ENCODE measurements at regions of chr5 and their contacts with region 1.

Region 1: GRCh38 chr5:11182441-11183268 is 421.6 kb upstream of the DAP start:
- DNase-seq: peak in 3 of 7 donors; percentile 24 to 32 (median 29)
- H3K4me3 ChIP-seq: no peak overlapping the region
- H3K27ac ChIP-seq: no peak overlapping the region
- H3K4me1 ChIP-seq: no peaks in the 10 kb centered on the region
- H3K27me3 ChIP-seq: no peaks in the 10 kb centered on the region
- CTCF ChIP-seq: peak; percentile 34 to 56 (median 48)
- POLR2A ChIP-seq: no peak

Region 2: DNA sequence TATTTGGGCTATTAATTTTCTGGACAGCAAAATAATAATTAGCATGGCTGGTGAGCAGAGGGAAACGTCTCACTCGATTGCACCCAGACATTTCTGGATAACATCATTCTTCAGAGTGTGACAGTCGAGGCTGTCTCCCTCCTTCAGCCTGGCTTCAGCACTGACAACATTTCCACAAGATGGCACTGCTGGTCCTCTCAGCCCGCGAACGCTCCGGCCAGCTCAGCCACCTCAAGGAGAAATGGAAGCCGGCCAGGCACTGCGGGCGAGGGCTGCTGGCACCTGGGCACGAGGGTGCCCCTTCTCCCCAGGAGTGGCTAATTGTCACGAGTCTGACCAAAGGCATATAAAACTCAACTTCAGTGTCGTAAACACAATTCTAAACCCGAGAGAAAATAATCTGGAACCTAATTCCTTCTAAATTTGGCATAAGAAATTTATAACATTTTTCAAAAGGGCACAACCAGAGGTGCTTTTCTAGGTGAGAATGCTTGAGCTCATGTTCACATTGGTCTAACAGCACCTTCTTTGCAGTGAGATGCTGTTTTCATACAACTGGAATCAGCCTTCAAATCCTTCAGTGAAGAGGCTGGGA is 487.5 kb before region 1 on chr5:
- intact Hi-C with region 1: loop called in 1 of 2 experiments (anchors 5 kb)
- DNase-seq: peak; percentile 71 to 90 (median 86)
- H3K4me3 ChIP-seq: no peak overlapping the region
- H3K27ac ChIP-seq: no peak overlapping the region
- H3K4me1 ChIP-seq: peaks cover 3 to 5% of the 10 kb centered on the region in 2 donors
- H3K27me3 ChIP-seq: no peaks in the 10 kb centered on the region
- CTCF ChIP-seq: peak; percentile 63 to 83 (median 82)
- POLR2A ChIP-seq: no peak

Region 3: DNA sequence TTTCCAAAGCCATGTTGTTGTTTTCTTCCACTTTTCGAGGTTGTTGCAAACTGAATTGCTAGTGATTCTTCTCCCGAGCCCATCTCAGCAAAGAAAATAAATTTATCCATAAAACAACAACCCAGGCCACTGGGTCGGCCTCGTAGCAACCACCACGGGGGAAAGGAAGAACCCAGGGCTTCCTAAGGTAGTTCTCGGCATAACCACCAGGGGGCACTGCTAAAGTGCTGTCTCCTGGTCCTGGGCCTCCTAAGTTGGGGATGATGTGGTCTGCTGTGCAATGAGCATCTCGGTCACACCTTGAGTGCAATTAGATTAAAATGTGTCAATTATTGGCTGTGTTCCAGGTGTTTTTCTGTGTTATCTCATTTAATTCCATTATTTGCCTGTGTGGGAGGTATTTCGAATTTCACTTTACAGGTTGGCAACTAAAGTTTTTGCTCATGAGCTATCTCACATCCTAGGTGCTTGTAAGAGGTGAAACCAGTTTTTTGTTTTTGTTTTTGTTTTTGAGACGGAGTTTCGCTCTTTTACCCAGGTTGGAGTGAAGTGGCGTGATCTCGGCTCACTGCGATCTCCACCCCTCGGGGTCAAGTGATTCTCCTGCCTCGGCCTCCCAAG is 318.8 kb before region 1 on chr5:
- intact Hi-C with region 1: loop called in 1 of 2 experiments (anchors 5 kb)
- DNase-seq: peak; percentile 39 to 82 (median 67)
- H3K4me3 ChIP-seq: no peak overlapping the region
- H3K27ac ChIP-seq: no peak overlapping the region
- H3K4me1 ChIP-seq: no peaks in the 10 kb centered on the region
- H3K27me3 ChIP-seq: no peaks in the 10 kb centered on the region
- CTCF ChIP-seq: peak; percentile 60 to 84 (median 74)
- POLR2A ChIP-seq: no peak

Region 4: DNA sequence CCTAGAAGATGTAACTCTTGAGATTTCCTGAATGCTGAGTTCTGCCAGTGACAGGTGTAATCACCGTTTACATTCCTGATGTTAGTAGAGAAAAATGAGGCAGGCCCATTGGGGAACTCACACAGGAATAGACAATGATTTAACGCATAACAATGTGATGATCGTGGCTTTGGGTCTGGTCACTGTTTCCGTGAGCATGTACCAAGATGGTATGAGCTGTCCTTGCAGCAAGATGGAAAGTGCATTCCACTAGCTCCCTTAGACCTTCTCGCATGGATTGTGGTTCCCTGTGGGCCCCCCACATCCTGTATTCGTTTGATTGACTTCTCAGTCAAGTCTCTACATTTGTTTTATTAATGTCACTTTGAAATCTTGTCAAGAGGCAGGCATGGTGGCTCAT is 297.6 kb before region 1 on chr5:
- intact Hi-C with region 1: no loop called
- DNase-seq: no peak
- H3K4me3 ChIP-seq: no peak overlapping the region
- H3K27ac ChIP-seq: no peak overlapping the region
- H3K4me1 ChIP-seq: no peaks in the 10 kb centered on the region
- H3K27me3 ChIP-seq: no peaks in the 10 kb centered on the region
- CTCF ChIP-seq: no peak
- POLR2A ChIP-seq: no peak

Region 5: GRCh38 chr5:10913846-10914245 is 268.8 kb before region 1 on chr5:
- intact Hi-C with region 1: no loop called
- DNase-seq: peak; percentile 44 to 81 (median 79)
- H3K4me3 ChIP-seq: no peak overlapping the region
- H3K27ac ChIP-seq: peak overlapping the region in 1 of 5 donors; percentile 47
- H3K4me1 ChIP-seq: peaks cover 0 to 11% of the 10 kb centered on the region in 2 donors
- H3K27me3 ChIP-seq: no peaks in the 10 kb centered on the region
- CTCF ChIP-seq: no peak
- POLR2A ChIP-seq: no peak

Region 6: DNA sequence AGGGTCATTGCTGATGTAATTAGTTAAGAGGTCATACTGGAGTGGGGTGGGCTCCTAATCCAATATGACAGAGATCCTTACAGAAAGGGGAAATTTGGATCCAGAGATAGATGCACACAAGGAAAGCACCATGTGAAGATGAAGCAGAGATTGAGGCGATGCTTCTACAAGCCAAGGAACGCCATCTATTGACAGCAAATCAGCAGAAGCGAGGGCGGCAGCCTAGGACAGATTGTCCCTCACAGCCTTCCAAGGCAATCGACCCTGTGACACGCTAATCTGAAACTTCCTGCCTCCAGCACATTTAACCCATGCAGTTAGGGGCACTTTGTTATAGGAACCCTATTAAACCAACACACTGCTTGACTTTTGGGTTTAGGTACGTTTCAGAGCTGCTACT is 136.5 kb before region 1 on chr5:
- intact Hi-C with region 1: no loop called
- DNase-seq: peak in 2 of 7 donors; percentile 4 to 17
- H3K4me3 ChIP-seq: no peak overlapping the region
- H3K27ac ChIP-seq: no peak overlapping the region
- H3K4me1 ChIP-seq: no peaks in the 10 kb centered on the region
- H3K27me3 ChIP-seq: no peaks in the 10 kb centered on the region
- CTCF ChIP-seq: no peak
- POLR2A ChIP-seq: no peak

Region 7: DNA sequence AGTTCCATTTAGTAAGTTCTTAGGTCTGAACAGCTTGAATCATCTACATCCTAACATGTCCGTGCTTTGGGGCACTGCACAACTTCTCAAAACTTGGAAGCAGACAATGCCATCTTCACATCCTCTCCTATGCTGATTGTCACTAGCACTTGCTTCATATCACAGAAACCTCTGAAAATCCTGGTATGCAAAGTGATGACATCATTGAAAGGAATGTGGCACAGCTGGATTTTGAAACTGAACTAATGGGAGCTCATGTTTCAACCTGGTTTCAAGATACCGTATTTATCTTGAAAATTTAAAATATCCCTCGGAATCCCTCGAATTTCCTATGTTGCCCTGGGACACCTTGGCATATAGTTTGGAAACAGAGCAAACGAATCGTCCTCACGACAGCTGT is 68.6 kb after region 1 on chr5:
- intact Hi-C with region 1: no loop called
- DNase-seq: no peak
- H3K4me3 ChIP-seq: no peak overlapping the region
- H3K27ac ChIP-seq: no peak overlapping the region
- H3K4me1 ChIP-seq: no peaks in the 10 kb centered on the region
- H3K27me3 ChIP-seq: no peaks in the 10 kb centered on the region
- CTCF ChIP-seq: no peak
- POLR2A ChIP-seq: no peak